Ascending aorta (tissue), 2 donors: ENCODE measurements at regions of chr3 and their contacts with region 1.

Region 1: GRCh38 chr3:65979162-65979561 is 59.6 kb downstream of the MAGI1 start:
- DNase-seq: peak in 1 of 2 donors; percentile 84
- H3K4me3 ChIP-seq: peak overlapping the region in 1 of 2 donors; percentile 19
- H3K27ac ChIP-seq: peak overlapping the region; percentile 68 to 70
- H3K4me1 ChIP-seq: peaks cover 6 to 26% of the 10 kb centered on the region in 2 donors
- H3K27me3 ChIP-seq: no peaks in the 10 kb centered on the region
- CTCF ChIP-seq: no peak

Region 2: GRCh38 chr3:65894679-65895453 is 84.3 kb before region 1 on chr3:
- intact Hi-C with region 1: loop called (anchors 2 kb)
- DNase-seq: peak in 1 of 2 donors; percentile 76
- H3K4me3 ChIP-seq: no peak overlapping the region
- H3K27ac ChIP-seq: peak overlapping the region; percentile 76 to 84
- H3K4me1 ChIP-seq: peaks cover 3 to 30% of the 10 kb centered on the region in 2 donors
- H3K27me3 ChIP-seq: no peaks in the 10 kb centered on the region
- CTCF ChIP-seq: no peak

Region 3: DNA sequence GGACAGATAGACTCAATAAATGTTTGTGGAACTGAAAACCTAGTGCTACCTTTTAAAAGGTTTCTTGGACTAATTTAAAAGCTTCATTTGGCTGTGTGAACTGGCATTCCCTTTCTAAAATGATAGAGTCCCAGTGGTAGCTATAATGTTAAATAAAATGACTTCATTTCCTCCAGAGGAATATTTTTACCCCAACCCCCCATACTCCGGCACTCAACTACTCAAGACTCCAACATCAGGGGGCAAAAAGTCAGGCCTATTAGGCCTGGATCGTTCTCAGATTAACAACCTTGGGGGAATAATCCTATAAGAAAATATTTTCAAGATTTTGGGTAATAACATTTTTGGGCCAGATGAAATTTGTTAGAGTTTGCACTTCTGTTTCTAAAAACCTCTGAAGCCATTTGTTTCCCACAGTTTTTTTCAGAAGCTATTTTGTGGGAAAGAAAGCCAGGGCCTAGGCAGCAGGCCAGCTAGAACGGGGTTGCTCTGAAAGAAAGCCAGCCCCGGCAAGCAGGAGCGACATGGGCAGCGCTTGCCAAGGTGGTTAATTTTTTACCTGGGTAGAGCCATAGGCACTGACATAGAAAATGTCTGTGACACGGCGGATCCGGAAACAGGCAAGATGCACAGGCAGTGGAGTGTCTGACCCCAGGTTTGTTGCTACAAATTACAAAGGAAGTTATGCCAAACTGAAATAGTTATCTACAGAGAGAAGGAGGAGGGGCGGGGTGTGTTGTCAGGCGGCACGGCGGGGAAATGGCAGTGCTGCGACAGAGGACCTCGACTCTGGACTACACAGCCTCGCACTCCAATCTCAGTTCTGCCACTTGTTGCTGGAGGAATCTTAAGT is 25.1 kb before region 1 on chr3:
- intact Hi-C with region 1: loop called (anchors 2 kb)
- DNase-seq: no peak
- H3K4me3 ChIP-seq: peak overlapping the region; percentile 37 to 38
- H3K27ac ChIP-seq: peak overlapping the region; percentile 66 to 74
- H3K4me1 ChIP-seq: peaks cover 0 to 36% of the 10 kb centered on the region in 2 donors
- H3K27me3 ChIP-seq: no peaks in the 10 kb centered on the region
- CTCF ChIP-seq: no peak

Region 4: GRCh38 chr3:66386925-66387650 is 407.9 kb after region 1 on chr3:
- intact Hi-C with region 1: no loop called
- DNase-seq: no peak
- H3K4me3 ChIP-seq: no peak overlapping the region
- H3K27ac ChIP-seq: no peak overlapping the region
- H3K4me1 ChIP-seq: peaks cover 0 to 5% of the 10 kb centered on the region in 2 donors
- H3K27me3 ChIP-seq: no peaks in the 10 kb centered on the region
- CTCF ChIP-seq: no peak